Heart right ventricle (tissue), 16 donors: ENCODE measurements at regions of chr5 and their contacts with region 1.

Region 1: GRCh38 chr5:73902327-73903051 is 276.5 kb downstream of the ARHGEF28 start:
- DNase-seq: peak in 1 of 2 donors; percentile 14
- ATAC-seq: peak in 5 of 8 donors; percentile 26 to 44 (median 34)
- H3K4me3 ChIP-seq: peak overlapping the region in 3 of 10 donors; percentile 4 to 25 (median 8)
- H3K27ac ChIP-seq: peak overlapping the region in 2 of 10 donors; percentile 56 to 59
- H3K4me1 ChIP-seq: peaks cover 0 to 54% (median 15%) of the 10 kb centered on the region in 9 donors
- H3K27me3 ChIP-seq: no peaks in the 10 kb centered on the region
- CTCF ChIP-seq: peak; percentile 69 to 93 (median 85)

Region 2: GRCh38 chr5:73861313-73861988 is 41.0 kb before region 1 on chr5:
- intact Hi-C with region 1: loop called in 1 of 10 experiments (anchors 5 kb)
- DNase-seq: no peak
- ATAC-seq: no peak
- H3K4me3 ChIP-seq: no peak overlapping the region
- H3K27ac ChIP-seq: peak overlapping the region in 1 of 10 donors; percentile 27
- H3K4me1 ChIP-seq: peaks cover 0 to 45% (median 15%) of the 10 kb centered on the region in 9 donors
- H3K27me3 ChIP-seq: no peaks in the 10 kb centered on the region
- CTCF ChIP-seq: no peak

Region 3: DNA sequence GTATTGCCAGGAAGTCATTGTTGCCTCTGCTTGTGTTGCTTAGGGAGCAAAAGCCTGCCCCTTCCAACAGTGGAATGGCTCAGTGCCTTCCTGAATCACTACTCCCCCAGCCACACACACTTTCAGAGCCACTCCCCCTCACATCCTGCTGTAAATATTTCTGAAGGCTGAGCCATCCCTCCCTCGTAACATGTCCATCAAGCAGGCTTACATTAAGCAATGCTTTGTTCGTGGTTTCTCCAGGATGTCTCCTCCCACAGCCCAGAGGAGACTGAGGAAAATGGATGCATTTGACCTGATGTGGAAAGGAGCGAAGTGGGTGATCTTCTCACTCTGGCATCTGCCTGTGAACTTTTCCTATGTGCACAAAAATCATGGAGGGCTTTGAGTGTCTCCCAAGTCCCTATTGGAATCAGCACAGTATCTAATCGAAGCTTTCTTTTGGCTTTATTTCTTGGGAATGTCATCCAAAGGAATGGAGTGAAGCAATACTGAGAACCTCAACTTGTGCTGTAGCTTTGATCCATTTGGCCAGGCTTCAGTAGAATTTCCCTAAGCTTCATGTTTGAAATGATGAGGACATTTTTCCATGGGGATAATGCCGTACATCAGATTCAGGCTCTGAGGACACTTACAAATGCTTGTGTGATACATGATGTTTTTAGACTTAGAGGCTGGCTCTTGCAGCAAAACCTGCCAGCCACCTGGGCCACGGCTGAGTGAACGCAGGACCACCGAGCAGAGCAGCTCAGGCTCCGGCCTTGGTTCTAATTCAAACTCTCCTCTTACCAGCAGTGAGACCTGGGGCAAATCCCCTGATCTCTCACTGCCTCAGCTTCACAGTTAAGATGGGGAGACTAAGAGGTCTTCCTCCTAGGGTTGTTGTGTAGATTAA is 348.9 kb after region 1 on chr5:
- intact Hi-C with region 1: loop called in 1 of 10 experiments (anchors 10 kb)
- DNase-seq: peak in 1 of 2 donors; percentile 50
- ATAC-seq: peak; percentile 61 to 92 (median 82)
- H3K4me3 ChIP-seq: no peak overlapping the region
- H3K27ac ChIP-seq: peak overlapping the region in 4 of 10 donors; percentile 9 to 65 (median 29)
- H3K4me1 ChIP-seq: peaks cover 0 to 20% (median 11%) of the 10 kb centered on the region in 9 donors
- H3K27me3 ChIP-seq: no peaks in the 10 kb centered on the region
- CTCF ChIP-seq: no peak

Region 4: GRCh38 chr5:74766849-74767578 is 864.5 kb after region 1 on chr5 and contains the starts of genes GFM2 and NSA2:
- intact Hi-C with region 1: loop called in 1 of 10 experiments (anchors 5 kb)
- DNase-seq: peak; percentile 90 to 94
- ATAC-seq: peak; percentile 99 to 100 (median 99)
- H3K4me3 ChIP-seq: peak within 1 kb of the TSS; percentile 79 to 96 (median 91)
- H3K27ac ChIP-seq: peak within 1 kb of the TSS; percentile 12 to 88 (median 78)
- H3K4me1 ChIP-seq: peaks cover 5 to 42% (median 30%) of the 10 kb centered on the region in 9 donors
- H3K27me3 ChIP-seq: no peaks in the 10 kb centered on the region
- CTCF ChIP-seq: no peak
- total RNA-seq, gene GFM2: 33.1 to 62.7 (median 49.2) TPM
- total RNA-seq, gene NSA2: 29.8 to 79.1 (median 50.5) TPM